ENCODE measurements at regions of chr12 and their contacts with region 1.

Region 1: GRCh38 chr12:100668945-100669536 is 95.6 kb downstream of the GAS2L3 start:
- DNase-seq: peak; percentile 71
- H3K4me3 ChIP-seq: no peak overlapping the region
- H3K27ac ChIP-seq: no peak overlapping the region
- H3K4me1 ChIP-seq: no peaks in the 10 kb centered on the region
- H3K27me3 ChIP-seq: peaks cover 0 to 8% of the 10 kb centered on the region in 2 experiments
- CTCF ChIP-seq: peak; percentile 89 to 92
- POLR2A ChIP-seq: no peak

Region 2: GRCh38 chr12:100061814-100062213 is 607.2 kb before region 1 on chr12:
- CTCF ChIA-PET with region 1: no interaction called
- POLR2A ChIA-PET with region 1: no interaction called
- dilution Hi-C with region 1: no loop called
- intact Hi-C with region 1: no loop called
- DNase-seq: no peak
- H3K4me3 ChIP-seq: no peak overlapping the region
- H3K27ac ChIP-seq: no peak overlapping the region
- H3K4me1 ChIP-seq: peaks cover 14% of the 10 kb centered on the region
- H3K27me3 ChIP-seq: no peaks in the 10 kb centered on the region
- CTCF ChIP-seq: no peak
- POLR2A ChIP-seq: no peak

Region 3: GRCh38 chr12:100234598-100235304 is 434.3 kb before region 1 on chr12:
- CTCF ChIA-PET with region 1: interaction called, 10 read pairs
- POLR2A ChIA-PET with region 1: no interaction called
- dilution Hi-C with region 1: no loop called
- intact Hi-C with region 1: loop called (anchors 10 kb)
- DNase-seq: peak; percentile 58
- H3K4me3 ChIP-seq: no peak overlapping the region
- H3K27ac ChIP-seq: no peak overlapping the region
- H3K4me1 ChIP-seq: no peaks in the 10 kb centered on the region
- H3K27me3 ChIP-seq: no peaks in the 10 kb centered on the region
- CTCF ChIP-seq: peak; percentile 52 to 53
- POLR2A ChIP-seq: no peak

Region 4: DNA sequence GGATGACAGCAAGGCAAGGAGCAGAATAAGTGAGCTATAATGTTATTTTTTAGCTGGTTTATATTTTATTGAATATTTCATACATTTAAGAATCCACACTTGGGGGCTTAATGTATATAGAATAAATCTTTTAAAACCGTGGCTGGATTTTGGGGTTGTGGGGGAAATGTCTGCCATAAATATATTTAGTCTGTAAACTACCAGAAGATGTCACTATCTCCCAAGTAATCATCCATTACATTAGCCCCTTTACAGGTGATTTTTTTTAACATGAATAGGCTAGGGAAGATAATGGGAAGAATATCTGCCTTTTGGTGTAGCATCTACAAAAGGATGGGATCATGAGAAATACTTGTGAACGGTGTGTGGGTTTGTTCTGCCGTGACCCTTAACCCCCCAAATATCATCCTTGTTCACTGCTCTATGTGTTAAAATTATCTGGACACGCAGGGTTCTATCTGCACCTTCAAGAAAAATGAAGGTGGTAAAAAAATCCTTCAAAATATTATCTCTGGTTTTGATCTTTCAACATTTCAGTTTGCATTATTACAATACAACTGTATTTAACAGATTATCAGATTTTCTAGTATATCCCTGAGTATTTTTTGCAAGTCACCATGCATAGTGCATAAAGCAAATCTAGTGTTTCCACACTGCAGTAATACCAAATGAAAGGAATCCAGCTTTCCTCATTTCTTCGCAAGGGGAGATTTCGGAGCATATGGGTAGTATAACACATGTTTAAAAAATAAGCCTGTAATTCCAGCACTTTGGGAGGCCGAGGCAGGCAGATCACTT is 320.2 kb before region 1 on chr12:
- CTCF ChIA-PET with region 1: interaction called, 17 read pairs
- POLR2A ChIA-PET with region 1: no interaction called
- dilution Hi-C with region 1: no loop called
- intact Hi-C with region 1: loop called (anchors 2 kb)
- DNase-seq: peak; percentile 37
- H3K4me3 ChIP-seq: no peak overlapping the region
- H3K27ac ChIP-seq: no peak overlapping the region
- H3K4me1 ChIP-seq: no peaks in the 10 kb centered on the region
- H3K27me3 ChIP-seq: peaks cover 0 to 2% of the 10 kb centered on the region in 2 experiments
- CTCF ChIP-seq: no peak
- POLR2A ChIP-seq: no peak

Region 5: GRCh38 chr12:100573292-100574186 is 95.5 kb before region 1 on chr12 and contains the start of gene GAS2L3:
- CTCF ChIA-PET with region 1: interaction called, 13 read pairs
- POLR2A ChIA-PET with region 1: no interaction called
- dilution Hi-C with region 1: no loop called
- intact Hi-C with region 1: loop called (anchors 5 kb)
- DNase-seq: peak; percentile 93
- H3K4me3 ChIP-seq: peak within 1 kb of the TSS; percentile 24 to 89 (median 87)
- H3K27ac ChIP-seq: peak within 1 kb of the TSS; percentile 79
- H3K4me1 ChIP-seq: peaks cover 34% of the 10 kb centered on the region
- H3K27me3 ChIP-seq: peaks cover 1 to 2% of the 10 kb centered on the region in 2 experiments
- CTCF ChIP-seq: no peak
- POLR2A ChIP-seq: peak; percentile 40
- total RNA-seq, gene GAS2L3: 39.9 and 47.1 TPM in 2 replicates

Region 6: GRCh38 chr12:100718187-100718586 is 49.1 kb after region 1 on chr12:
- CTCF ChIA-PET with region 1: interaction called, 3 read pairs
- POLR2A ChIA-PET with region 1: no interaction called
- dilution Hi-C with region 1: no loop called
- intact Hi-C with region 1: loop called (anchors 1 kb)
- DNase-seq: no peak
- H3K4me3 ChIP-seq: no peak overlapping the region
- H3K27ac ChIP-seq: no peak overlapping the region
- H3K4me1 ChIP-seq: peaks cover 5% of the 10 kb centered on the region
- H3K27me3 ChIP-seq: peaks cover 18 to 34% of the 10 kb centered on the region in 2 experiments
- CTCF ChIP-seq: no peak
- POLR2A ChIP-seq: no peak

Region 7: GRCh38 chr12:100733817-100734593 is 65.0 kb after region 1 on chr12:
- CTCF ChIA-PET with region 1: interaction called, 7 read pairs
- POLR2A ChIA-PET with region 1: no interaction called
- dilution Hi-C with region 1: no loop called
- intact Hi-C with region 1: loop called (anchors 1 kb)
- DNase-seq: peak; percentile 32
- H3K4me3 ChIP-seq: no peak overlapping the region
- H3K27ac ChIP-seq: no peak overlapping the region
- H3K4me1 ChIP-seq: no peaks in the 10 kb centered on the region
- H3K27me3 ChIP-seq: no peaks in the 10 kb centered on the region
- CTCF ChIP-seq: peak; percentile 31 to 48
- POLR2A ChIP-seq: no peak

Region 8: DNA sequence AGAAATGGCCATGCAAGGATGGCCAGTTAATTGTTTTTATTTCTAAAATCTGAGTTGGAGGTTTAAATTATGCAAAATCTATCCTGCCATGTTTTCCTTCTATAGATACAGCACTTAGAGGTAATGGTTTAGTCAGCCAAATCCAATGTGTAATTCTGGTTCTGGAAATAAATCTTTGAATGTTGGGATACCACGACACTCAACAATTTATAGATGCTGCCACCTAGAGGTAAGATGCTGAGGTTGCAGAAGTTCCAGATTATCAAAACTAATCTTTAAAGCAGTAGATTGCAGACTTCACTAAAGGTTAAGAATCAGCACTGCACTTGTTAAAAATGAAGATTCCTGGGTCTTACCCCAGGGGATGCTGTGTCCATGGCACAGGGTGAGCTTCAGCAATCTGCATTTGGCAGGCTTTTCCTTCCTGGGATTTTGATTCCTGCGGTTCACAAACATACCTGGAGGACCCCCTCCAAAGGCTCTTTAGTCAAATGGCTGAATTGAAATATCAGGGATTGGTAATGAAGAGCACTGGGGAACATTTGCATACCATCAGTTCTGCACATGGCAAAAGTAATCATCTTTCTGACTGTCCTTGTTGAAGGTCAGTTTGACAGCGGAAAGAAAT is 72.2 kb after region 1 on chr12:
- CTCF ChIA-PET with region 1: interaction called, 8 read pairs
- POLR2A ChIA-PET with region 1: no interaction called
- dilution Hi-C with region 1: no loop called
- intact Hi-C with region 1: loop called (anchors 1 kb)
- DNase-seq: peak; percentile 44
- H3K4me3 ChIP-seq: no peak overlapping the region
- H3K27ac ChIP-seq: no peak overlapping the region
- H3K4me1 ChIP-seq: no peaks in the 10 kb centered on the region
- H3K27me3 ChIP-seq: no peaks in the 10 kb centered on the region
- CTCF ChIP-seq: peak; percentile 52 to 60
- POLR2A ChIP-seq: no peak

Measured in endothelial cell of umbilical vein (primary cell).